Activated CD4-positive, alpha-beta memory T cell treated with anti-CD3 and anti-CD28 coated beads for 36 hours (primary cell): ENCODE measurements at regions of chr19 and their contacts with region 1.

Region 1: DNA sequence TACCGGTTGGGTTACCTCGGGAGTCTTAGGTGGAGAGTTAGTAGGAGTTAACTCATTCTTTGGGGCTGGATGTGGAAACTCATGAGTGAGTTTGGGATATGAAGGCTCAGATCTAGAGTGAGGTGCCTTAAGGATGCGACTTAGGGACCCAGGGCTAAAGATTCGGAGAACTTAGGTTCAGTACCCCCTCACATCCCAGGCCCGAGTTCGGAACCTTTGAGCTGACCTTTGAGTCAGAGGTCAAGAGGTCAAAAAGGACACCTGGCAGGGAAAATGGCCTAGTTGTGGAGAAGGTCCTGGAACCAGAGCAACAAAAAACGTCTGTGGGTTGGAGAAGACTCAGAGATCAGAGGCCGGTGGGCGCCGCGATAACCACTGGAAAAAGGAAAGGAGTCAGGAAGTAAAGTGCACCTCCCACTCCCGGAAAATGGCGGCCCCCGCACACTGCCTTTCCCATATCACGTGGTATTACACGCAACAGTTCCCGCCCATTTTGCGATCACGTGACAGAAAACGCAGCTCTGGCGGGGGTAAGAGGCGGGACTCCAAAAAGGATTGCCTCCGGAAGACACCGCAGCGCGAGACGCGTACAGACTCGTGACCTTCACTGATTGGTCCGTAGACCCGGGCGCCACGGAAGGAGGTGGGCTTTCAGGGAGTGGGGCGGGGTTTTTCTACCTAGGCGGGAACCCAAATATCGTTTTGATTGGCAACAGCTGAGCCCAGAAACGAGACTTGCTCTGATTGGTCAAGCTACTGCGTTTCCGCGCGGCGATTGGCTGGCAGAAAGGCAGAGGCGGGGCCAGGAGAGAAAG is at the start of gene ACTMAP:
- DNase-seq: peak; percentile 100
- H3K4me3 Mint-ChIP-seq: peak within 1 kb of the TSS; percentile 94
- H3K27ac Mint-ChIP-seq: peak within 1 kb of the TSS; percentile 97
- H3K4me1 Mint-ChIP-seq: peaks cover 32% of the 10 kb centered on the region
- H3K27me3 Mint-ChIP-seq: no peaks in the 10 kb centered on the region
- total RNA-seq, gene ACTMAP: 14.1 to 15.8 TPM

Region 2: GRCh38 chr19:40331069-40331468 is 419.2 kb before region 1 on chr19:
- CTCF ChIA-PET with region 1: no interaction called
- POLR2A ChIA-PET with region 1: no interaction called
- intact Hi-C with region 1: no loop called
- DNase-seq: no peak
- H3K4me3 Mint-ChIP-seq: no peak overlapping the region
- H3K27ac Mint-ChIP-seq: no peak overlapping the region
- H3K4me1 Mint-ChIP-seq: no peaks in the 10 kb centered on the region
- H3K27me3 Mint-ChIP-seq: no peaks in the 10 kb centered on the region

Region 3: DNA sequence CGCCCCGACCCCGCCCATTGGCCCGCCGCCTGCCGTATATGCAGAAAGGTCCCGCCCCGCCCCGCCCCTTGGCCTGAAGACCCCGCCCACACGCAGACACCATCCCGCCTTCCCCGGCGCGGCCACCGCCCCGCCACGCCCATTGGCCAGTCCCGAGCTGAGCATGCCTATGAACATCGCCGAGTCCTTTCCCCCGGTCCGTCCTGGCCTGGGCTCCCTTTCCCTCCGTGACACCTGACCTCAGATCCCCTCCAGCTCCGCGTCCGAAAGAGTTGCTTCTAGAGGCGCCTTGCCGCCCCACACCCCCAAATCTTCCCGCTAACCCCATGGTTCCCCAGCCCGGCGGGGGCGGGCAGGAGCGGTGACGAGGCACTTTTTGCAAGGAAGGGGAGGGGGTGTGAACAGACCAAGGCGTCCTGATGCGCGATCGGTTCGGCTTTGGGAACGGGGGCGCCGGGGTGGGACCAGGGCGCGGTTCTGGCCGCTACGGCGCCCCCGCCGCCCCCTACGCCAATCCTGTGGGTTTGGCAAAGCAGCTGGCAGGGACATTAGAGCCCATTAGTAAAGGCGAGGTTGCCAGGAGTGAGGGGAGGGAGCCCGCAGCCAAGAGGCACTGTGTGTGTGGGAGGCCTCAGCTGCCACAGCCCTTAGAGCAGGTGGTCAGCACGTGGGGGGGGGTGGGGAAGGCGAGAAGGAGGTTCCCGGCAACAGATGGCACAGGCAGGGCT is 59.4 kb before region 1 on chr19:
- CTCF ChIA-PET with region 1: no interaction called
- POLR2A ChIA-PET with region 1: interaction called, 8 read pairs
- intact Hi-C with region 1: loop called (anchors 1 kb)
- DNase-seq: peak; percentile 95
- H3K4me3 Mint-ChIP-seq: peak overlapping the region; percentile 79
- H3K27ac Mint-ChIP-seq: peak overlapping the region; percentile 93
- H3K4me1 Mint-ChIP-seq: peaks cover 4% of the 10 kb centered on the region
- H3K27me3 Mint-ChIP-seq: no peaks in the 10 kb centered on the region

Region 4: DNA sequence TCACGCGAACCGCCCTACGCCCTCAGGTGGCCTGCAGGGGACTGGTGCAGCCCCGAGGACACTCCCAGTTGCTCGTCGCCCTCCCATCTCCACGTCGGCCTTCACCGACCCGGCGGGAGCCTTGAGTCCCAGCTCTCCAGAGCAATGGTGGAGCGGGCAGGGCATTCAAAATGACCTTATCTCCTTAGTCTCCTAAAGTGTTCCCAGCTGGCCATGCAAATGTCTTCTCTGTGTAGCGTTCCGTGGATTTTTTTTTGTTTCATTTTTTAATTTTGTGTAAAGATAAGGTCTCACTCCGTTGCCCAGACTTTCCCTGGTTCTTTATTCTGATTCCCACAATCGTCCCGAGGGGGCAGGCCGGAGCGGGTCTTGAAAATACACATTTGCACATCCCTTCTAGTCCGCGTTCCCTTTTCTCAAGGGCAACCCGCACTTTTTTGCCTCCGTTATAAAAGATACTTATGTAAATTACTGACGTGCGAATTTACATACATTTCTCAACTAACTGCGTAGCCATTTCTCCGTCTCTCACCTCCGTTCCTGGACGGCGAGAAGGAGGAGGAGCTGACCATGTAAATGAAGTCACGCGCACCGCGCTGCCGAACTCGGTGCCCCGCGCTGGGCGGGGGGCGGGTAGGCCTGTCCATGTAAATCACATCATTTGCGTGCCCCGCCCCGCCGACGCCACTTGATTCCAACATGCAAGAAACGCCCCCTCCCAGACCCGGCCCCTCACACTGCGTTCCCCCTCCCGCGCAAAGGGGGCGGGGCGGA is 48.1 kb after region 1 on chr19:
- CTCF ChIA-PET with region 1: interaction called, 6 read pairs
- POLR2A ChIA-PET with region 1: interaction called, 8 read pairs
- intact Hi-C with region 1: loop called (anchors 1 kb)
- DNase-seq: peak; percentile 100
- H3K4me3 Mint-ChIP-seq: peak overlapping the region; percentile 91
- H3K27ac Mint-ChIP-seq: peak overlapping the region; percentile 93
- H3K4me1 Mint-ChIP-seq: peaks cover 49% of the 10 kb centered on the region
- H3K27me3 Mint-ChIP-seq: no peaks in the 10 kb centered on the region

Region 5: DNA sequence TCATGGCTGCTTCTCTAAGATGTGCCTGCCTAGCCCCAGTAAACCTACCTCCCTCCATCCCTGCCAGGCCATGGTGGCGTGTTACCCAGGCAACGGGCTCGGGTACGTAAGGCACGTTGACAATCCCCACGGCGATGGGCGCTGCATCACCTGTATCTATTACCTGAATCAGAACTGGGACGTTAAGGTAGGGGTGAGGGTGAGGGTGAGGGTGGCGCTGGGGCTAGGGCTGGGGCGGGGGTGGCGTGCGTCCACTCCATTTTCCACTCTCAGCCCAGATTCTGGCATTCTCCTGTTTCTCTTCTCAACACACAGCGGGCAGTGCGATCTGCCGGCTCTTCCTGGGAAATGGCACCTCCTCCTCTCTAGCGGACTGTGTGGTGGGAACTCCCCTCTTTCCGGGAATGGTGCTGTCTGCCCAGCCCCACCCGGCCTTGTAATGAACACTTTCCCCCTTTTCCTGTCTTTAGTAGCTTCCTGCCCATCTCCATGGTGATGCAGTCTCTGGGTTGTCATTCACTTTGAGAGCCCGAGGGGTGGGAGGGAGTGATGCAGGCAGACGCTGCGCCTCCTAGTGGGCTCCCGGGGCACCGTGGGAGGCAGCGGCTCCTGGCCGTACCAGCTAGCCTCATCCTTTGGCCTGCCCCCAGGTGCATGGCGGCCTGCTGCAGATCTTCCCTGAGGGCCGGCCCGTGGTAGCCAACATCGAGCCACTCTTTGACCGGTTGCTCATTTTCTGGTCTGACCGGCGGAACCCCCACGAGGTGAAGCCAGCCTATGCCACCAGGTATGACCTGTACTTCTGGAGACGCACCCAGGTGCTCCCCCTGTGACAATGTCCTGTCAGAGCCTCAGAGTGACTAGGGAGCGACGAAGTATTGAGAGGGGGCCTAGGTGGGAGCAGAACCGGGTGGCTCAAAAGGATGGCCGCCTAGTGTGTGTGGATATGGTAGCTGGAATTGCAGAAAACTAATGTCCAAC is 56.5 kb after region 1 on chr19:
- CTCF ChIA-PET with region 1: interaction called, 58 read pairs
- POLR2A ChIA-PET with region 1: interaction called, 15 read pairs
- intact Hi-C with region 1: loop called (anchors 2 kb)
- DNase-seq: peak; percentile 89
- H3K4me3 Mint-ChIP-seq: peak overlapping the region; percentile 67
- H3K27ac Mint-ChIP-seq: peak overlapping the region; percentile 89
- H3K4me1 Mint-ChIP-seq: peaks cover 81% of the 10 kb centered on the region
- H3K27me3 Mint-ChIP-seq: no peaks in the 10 kb centered on the region